ENCODE measurements at regions of chr7 and their contacts with region 1.

Region 1: DNA sequence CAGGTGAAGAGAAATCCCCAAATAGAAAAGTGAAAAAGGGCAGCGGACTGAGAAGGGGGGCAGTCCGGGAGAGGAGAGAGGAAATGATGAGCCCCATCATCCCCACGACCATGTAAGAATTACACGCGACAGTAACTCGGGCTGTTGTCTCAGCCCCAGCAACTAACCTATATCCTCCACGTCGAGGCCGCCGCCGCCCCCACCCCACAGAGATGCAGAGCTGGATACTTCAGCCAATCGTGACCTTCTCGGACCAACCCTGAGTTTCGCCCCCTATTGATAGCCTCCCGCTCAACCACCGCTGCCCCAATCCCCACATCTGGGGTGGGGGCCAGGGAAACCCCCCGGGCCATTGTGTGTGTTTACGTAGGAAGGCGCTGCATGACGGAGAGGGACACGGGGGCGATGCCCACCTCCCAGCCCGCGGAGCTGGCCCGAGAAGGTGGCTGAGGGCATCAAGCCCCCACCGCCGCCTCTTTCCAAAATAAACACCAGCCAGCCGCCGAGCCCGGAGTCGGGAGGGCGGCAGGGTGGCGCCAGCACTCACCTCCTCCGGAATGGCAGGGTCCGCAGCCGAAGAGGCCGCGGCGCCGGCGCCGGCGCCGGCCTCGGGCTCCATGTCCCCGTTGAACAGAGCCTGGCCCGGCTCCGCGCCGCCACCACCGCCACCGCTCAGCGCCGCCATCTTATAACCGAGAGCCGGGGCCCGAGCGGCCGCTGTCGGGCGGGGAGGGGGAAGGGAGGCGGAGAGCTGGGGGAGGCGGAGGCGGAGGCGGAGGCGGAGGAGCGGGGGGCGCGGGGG is 509 bp downstream of the BRAF start:
- DNase-seq: peak in 34 of 35 experiments; percentile 64 to 90 (median 78)
- ATAC-seq: peak; percentile 79 to 85 (median 83)
- H3K4me3 ChIP-seq: peak overlapping the region; percentile 74 to 85
- H3K4me3 Mint-ChIP-seq: no peak overlapping the region
- H3K27ac ChIP-seq: peak overlapping the region; percentile 89
- H3K27ac Mint-ChIP-seq: no peak overlapping the region
- H3K4me1 ChIP-seq: peaks cover 5 to 13% of the 10 kb centered on the region in 2 experiments
- H3K4me1 Mint-ChIP-seq: peaks cover 28 to 34% (median 30%) of the 10 kb centered on the region in 3 donors
- H3K27me3 ChIP-seq: no peaks in the 10 kb centered on the region
- H3K27me3 Mint-ChIP-seq: no peaks in the 10 kb centered on the region

Region 2: GRCh38 chr7:139777948-139778841 is 1146.0 kb before region 1 on chr7 and contains the start of gene HIPK2:
- CTCF ChIA-PET with region 1: no interaction called
- POLR2A ChIA-PET with region 1: interaction called in 1 of 2 experiments, 10 read pairs
- DNase-seq: peak; percentile 46 to 81 (median 64)
- ATAC-seq: peak; percentile 67 to 73 (median 70)
- H3K4me3 ChIP-seq: peak within 1 kb of the TSS; percentile 86 to 91
- H3K4me3 Mint-ChIP-seq: peak within 1 kb of the TSS; percentile 91 to 100 (median 99)
- H3K27ac ChIP-seq: peak within 1 kb of the TSS; percentile 85
- H3K27ac Mint-ChIP-seq: peak within 1 kb of the TSS; percentile 96 to 99
- H3K4me1 ChIP-seq: peaks cover 7 to 28% of the 10 kb centered on the region in 2 experiments
- H3K4me1 Mint-ChIP-seq: peaks cover 42 to 51% (median 45%) of the 10 kb centered on the region in 3 donors
- H3K27me3 ChIP-seq: peaks cover 0 to 7% of the 10 kb centered on the region in 2 experiments
- H3K27me3 Mint-ChIP-seq: peaks cover 5 to 10% of the 10 kb centered on the region in 2 donors
- total RNA-seq, gene HIPK2: 32.7 to 34.5 (median 33.5) TPM

Region 3: GRCh38 chr7:140671966-140672365 is 252.3 kb before region 1 on chr7:
- CTCF ChIA-PET with region 1: no interaction called
- POLR2A ChIA-PET with region 1: interaction called in 1 of 2 experiments, 11 read pairs
- DNase-seq: no peak
- ATAC-seq: no peak
- H3K4me3 ChIP-seq: no peak overlapping the region
- H3K4me3 Mint-ChIP-seq: peak overlapping the region; percentile 75 to 89 (median 77)
- H3K27ac ChIP-seq: no peak overlapping the region
- H3K27ac Mint-ChIP-seq: peak overlapping the region; percentile 65 to 68
- H3K4me1 ChIP-seq: peaks cover 3 to 22% of the 10 kb centered on the region in 2 experiments
- H3K4me1 Mint-ChIP-seq: peaks cover 19 to 37% (median 35%) of the 10 kb centered on the region in 3 donors
- H3K27me3 ChIP-seq: peaks cover 0 to 2% of the 10 kb centered on the region in 2 experiments
- H3K27me3 Mint-ChIP-seq: no peaks in the 10 kb centered on the region

Region 4: DNA sequence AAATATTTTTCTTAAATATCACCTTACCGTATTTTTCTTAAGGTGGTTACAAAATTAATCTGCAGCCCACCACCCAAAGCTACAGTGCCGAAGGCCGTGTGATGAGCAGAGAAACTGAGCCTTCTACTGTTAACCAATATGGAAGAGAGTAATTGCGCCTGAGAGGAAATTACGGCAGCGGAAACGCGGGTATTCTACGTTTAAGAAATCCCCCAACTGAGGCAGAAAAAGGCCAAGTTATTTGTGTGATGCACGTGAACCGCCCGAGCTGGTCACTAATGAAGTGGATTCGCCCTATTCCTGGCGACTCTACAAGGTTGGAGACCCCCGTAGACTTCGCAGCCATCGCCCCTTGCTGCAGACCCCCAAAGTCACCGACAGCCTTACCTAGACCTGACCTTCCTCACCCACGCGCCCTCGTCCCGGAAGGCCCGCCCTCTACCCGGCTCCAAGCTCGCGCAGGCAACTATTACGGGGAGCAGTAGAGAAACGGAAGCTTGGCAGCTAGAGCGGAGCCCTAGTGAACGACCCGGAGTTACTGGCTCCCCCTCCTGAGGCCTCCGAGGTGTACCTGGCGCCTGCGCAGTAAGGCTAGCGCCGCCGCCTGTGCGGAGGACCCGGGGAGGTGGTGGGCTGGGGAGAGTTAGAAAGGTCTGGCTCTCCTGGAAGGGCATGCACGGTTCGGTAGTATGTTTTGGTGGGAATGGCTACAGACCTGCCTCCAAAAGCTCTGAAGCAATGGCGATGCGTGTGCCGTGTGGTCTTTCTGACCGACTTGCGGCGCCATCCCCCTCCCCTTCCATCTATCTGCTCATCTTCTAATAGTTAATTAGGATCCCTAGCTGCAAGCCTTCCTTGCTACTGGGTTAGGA is 90.5 kb after region 1 on chr7 and contains the start of gene MRPS33:
- CTCF ChIA-PET with region 1: interaction called, 6 to 9 read pairs
- POLR2A ChIA-PET with region 1: interaction called in 1 of 2 experiments, 23 read pairs
- DNase-seq: peak; percentile 87 to 97 (median 94)
- ATAC-seq: peak; percentile 95 to 99 (median 98)
- H3K4me3 ChIP-seq: peak within 1 kb of the TSS; percentile 66 to 85
- H3K4me3 Mint-ChIP-seq: peak within 1 kb of the TSS; percentile 82 to 98 (median 96)
- H3K27ac ChIP-seq: peak within 1 kb of the TSS; percentile 98
- H3K27ac Mint-ChIP-seq: peak within 1 kb of the TSS; percentile 98 to 100
- H3K4me1 ChIP-seq: peaks cover 10 to 13% of the 10 kb centered on the region in 2 experiments
- H3K4me1 Mint-ChIP-seq: peaks cover 36 to 42% (median 39%) of the 10 kb centered on the region in 3 donors
- H3K27me3 ChIP-seq: peaks cover 0 to 3% of the 10 kb centered on the region in 2 experiments
- H3K27me3 Mint-ChIP-seq: peaks cover 5 to 13% of the 10 kb centered on the region in 2 donors
- total RNA-seq, gene MRPS33: 24.2 to 45.5 (median 38.6) TPM

Measured in T-cell (primary cell).